ENCODE measurements at regions of chr16 and their contacts with region 1.

Region 1: DNA sequence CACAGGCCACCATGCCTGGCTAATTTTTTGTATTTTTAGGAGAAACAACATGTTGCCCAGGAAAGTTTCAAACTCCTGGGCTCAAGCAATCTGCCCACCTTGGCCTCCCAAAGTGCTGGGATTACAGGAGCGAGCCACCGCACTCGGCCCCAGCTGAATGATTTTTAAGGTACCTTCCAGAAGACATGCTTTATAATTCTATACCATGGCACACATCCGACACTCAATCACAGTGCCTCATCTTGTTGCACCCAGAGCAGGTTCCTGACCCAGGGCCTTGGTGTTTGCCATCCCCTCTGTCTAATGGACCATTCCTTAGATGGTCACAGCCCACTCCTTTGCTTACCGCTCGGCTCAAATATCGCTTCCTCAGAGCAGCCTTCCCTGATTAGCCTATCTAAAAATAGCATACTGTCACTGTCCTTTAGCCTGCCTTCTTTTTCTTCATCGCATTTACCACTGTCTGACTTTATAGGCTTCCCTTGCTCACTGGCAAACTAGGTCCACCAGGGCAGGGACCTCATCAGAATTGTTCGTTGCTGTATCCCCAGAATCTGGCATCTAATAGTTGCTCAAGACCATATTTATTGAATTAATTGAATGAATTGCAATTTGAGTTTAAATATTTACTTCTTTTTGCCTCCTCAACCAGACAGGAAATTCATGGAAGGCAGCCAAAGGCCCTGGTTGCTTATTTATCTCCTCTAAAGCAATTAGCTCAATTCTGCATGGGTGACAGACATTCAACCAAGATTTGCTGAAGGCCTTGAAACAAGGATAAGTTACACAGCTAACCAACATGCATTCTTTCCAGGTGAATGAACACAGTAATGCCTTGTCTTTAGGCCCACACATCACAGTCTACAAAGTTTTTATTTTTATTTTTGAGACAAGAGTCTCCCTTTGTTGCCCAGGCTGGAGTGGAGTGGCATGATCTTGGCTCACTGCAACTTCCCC is 6.3 kb upstream of the TENT4B start:
- DNase-seq: no peak
- ATAC-seq: peak in 1 of 2 donors; percentile 77
- H3K4me3 ChIP-seq: no peak overlapping the region
- H3K27ac ChIP-seq: peak overlapping the region; percentile 25 to 62 (median 42)
- H3K4me1 ChIP-seq: peaks cover 11 to 22% of the 10 kb centered on the region in 2 donors
- H3K27me3 ChIP-seq: no peaks in the 10 kb centered on the region
- CTCF ChIP-seq: no peak
- POLR2A ChIP-seq: no peak

Region 2: DNA sequence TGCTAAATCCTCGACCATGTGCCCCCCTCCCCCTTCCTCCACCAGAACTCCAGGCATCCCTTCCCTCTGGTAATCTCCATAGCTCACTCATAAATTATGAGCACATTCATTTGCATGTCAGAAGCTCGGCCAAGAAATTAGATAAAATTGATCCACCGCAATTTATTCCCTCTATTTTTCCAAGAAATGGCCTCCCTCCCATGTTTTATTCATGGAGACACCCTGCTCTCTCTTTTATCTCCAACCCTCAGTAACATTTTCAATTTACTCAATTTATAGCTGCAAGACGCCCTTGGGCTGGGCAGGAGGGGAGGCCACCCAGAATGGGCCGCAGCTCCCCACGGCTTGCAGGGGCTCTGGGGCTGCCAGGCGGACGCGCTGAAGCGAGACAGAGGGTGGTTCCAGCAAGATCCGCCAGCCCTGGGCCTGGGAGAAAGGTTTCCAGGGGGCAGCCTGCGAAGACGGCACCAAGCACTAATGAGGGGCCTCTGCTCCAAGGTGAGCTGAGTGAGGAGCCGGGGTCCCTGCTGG is 236.2 kb before region 1 on chr16:
- in situ Hi-C with region 1: no loop called
- intact Hi-C with region 1: no loop called
- DNase-seq: no peak
- ATAC-seq: no peak
- H3K4me3 ChIP-seq: no peak overlapping the region
- H3K27ac ChIP-seq: no peak overlapping the region
- H3K4me1 ChIP-seq: no peaks in the 10 kb centered on the region
- H3K27me3 ChIP-seq: no peaks in the 10 kb centered on the region
- CTCF ChIP-seq: no peak
- POLR2A ChIP-seq: no peak

Region 3: DNA sequence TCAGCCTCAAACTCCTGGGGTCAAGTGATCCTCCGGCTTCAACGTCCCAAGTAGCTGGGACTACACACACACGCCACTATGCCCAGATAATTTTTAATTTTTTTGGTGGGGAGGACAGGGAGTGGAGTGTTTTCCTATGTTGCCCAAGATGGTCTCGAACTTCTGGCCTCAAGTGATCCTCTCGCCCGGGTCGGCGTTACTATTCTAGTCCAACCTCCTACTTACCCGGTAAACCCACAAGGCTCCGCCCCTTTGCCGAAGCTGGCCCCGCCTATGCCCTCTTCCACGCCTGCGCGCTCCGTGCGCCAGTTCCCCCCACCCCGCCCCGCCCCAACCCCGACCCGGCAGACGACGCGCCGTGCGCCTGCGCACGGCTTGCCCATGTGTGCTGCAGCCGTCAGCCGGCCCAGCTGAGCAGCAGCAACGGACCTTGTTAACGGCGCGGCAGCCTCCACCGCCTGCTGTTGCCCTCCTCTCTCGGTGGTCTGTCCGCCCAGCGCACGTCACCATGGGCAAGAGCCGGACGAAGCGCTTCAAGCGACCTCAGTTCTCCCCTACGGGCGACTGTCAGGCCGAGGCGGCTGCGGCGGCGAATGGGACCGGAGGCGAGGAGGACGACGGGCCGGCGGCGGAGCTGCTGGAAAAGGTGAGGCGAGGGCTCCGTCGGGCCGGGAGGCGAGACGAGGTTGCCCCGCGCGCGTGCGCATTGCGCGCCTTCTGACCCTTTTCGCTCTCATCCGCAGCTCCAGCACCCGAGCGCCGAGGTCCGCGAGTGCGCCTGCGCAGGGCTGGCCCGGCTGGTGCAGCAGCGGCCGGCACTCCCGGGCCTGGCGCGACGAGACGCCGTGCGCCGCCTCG is 80.9 kb before region 1 on chr16 and contains the start of gene HEATR3:
- in situ Hi-C with region 1: loop called in 1 of 4 experiments (anchors 10 kb)
- intact Hi-C with region 1: no loop called
- DNase-seq: peak; percentile 79 to 89
- ATAC-seq: peak; percentile 97 to 98
- H3K4me3 ChIP-seq: peak within 1 kb of the TSS; percentile 85 to 99 (median 85)
- H3K27ac ChIP-seq: peak within 1 kb of the TSS; percentile 91 to 99 (median 94)
- H3K4me1 ChIP-seq: peaks cover 19 to 27% of the 10 kb centered on the region in 2 donors
- H3K27me3 ChIP-seq: no peaks in the 10 kb centered on the region
- CTCF ChIP-seq: no peak
- POLR2A ChIP-seq: peak; percentile 56 to 61
- total RNA-seq, gene HEATR3: 13.1 to 25.8 (median 14.2) TPM

Region 4: GRCh38 chr16:50166511-50167500 is 20.0 kb after region 1 on chr16:
- in situ Hi-C with region 1: no loop called
- intact Hi-C with region 1: no loop called
- DNase-seq: no peak
- ATAC-seq: no peak
- H3K4me3 ChIP-seq: no peak overlapping the region
- H3K27ac ChIP-seq: no peak overlapping the region
- H3K4me1 ChIP-seq: peaks cover 20 to 31% of the 10 kb centered on the region in 2 donors
- H3K27me3 ChIP-seq: no peaks in the 10 kb centered on the region
- CTCF ChIP-seq: no peak
- POLR2A ChIP-seq: no peak

Region 5: DNA sequence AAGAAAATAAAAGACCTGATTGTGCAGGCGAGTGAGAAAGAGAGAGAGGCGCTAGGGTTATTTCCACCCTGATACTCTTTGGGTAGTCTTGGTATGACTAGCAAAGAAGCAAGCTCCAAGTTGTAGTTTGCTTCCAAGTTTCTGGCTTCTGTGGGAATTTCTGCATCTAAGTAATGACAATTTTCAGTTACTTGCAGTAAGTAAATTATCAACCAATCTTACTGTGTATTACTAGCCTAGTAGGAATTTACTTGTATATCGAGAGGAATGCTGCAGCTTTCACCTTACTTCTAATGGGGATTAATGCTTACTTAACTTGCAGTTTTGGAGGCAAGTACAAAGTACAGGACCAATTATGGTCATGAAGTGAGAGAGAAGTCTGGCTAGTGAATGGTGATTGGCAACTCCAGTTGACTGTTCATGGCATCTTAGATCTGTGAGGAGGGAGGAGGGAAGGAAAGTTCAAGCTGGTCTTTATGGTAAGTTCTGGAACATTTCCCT is 38.3 kb after region 1 on chr16:
- in situ Hi-C with region 1: no loop called
- intact Hi-C with region 1: no loop called
- DNase-seq: no peak
- ATAC-seq: no peak
- H3K4me3 ChIP-seq: no peak overlapping the region
- H3K27ac ChIP-seq: no peak overlapping the region
- H3K4me1 ChIP-seq: peaks cover 12 to 17% of the 10 kb centered on the region in 2 donors
- H3K27me3 ChIP-seq: no peaks in the 10 kb centered on the region
- CTCF ChIP-seq: no peak
- POLR2A ChIP-seq: no peak

Region 6: GRCh38 chr16:50202926-50203624 is 56.3 kb after region 1 on chr16:
- in situ Hi-C with region 1: loop called in 1 of 4 experiments (anchors 10 kb)
- intact Hi-C with region 1: no loop called
- DNase-seq: no peak
- ATAC-seq: no peak
- H3K4me3 ChIP-seq: no peak overlapping the region
- H3K27ac ChIP-seq: peak overlapping the region in 1 of 4 donors; percentile 14
- H3K4me1 ChIP-seq: peaks cover 55 to 58% of the 10 kb centered on the region in 2 donors
- H3K27me3 ChIP-seq: no peaks in the 10 kb centered on the region
- CTCF ChIP-seq: no peak
- POLR2A ChIP-seq: no peak